ENCODE measurements at regions of chr17 and their contacts with region 1.

Region 1: DNA sequence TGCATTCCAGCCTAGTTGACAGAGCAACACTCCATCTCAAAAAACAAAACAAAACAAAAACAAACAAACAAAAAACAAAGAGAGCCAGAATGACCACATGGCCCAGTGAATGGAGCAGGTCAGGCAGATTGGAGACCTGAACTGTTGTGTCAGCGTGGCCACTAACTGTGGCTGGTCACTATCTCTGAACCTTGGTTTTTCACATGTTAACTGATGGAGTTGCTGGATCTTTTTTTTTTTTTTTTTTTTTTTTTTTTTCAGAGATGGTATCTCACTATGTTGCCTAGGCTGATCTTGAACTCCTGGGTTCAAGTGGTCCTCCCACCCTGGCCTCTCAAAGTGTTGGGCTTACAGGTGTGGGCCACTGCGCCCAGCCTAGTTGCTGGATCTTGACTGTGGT is 31.8 kb downstream of the RHBDL3 start:
- DNase-seq: no peak
- H3K4me3 ChIP-seq: no peak overlapping the region
- H3K27ac ChIP-seq: no peak overlapping the region
- H3K4me1 ChIP-seq: peaks cover 0 to 16% (median 1%) of the 10 kb centered on the region in 4 experiments; a peak in 5 of 7 replicates
- H3K27me3 ChIP-seq: no peaks in the 10 kb centered on the region
- CTCF ChIP-seq: no peak
- EP300 ChIP-seq: no peak
- POLR2A ChIP-seq: no peak
- RAD21 ChIP-seq: no peak

Region 2: GRCh38 chr17:32265192-32265923 is 32.1 kb before region 1 on chr17 and contains the start of gene RHBDL3:
- CTCF ChIA-PET with region 1: interaction called, 12 read pairs
- POLR2A ChIA-PET with region 1: no interaction called
- DNase-seq: no peak
- H3K4me3 ChIP-seq: peak within 1 kb of the TSS; percentile 42 to 87 (median 67)
- H3K27ac ChIP-seq: no peak within 1 kb of the TSS
- H3K4me1 ChIP-seq: peaks cover 7 to 24% (median 16%) of the 10 kb centered on the region in 4 experiments
- H3K27me3 ChIP-seq: peaks cover 0 to 34% (median 29%) of the 10 kb centered on the region in 4 experiments; a peak in 5 of 7 replicates
- CTCF ChIP-seq: no peak
- EP300 ChIP-seq: no peak
- POLR2A ChIP-seq: no peak
- RAD21 ChIP-seq: no peak
- total RNA-seq, gene RHBDL3: 11.8 and 12.2 TPM in 2 replicates

Region 3: GRCh38 chr17:32281011-32281451 is 16.4 kb before region 1 on chr17:
- CTCF ChIA-PET with region 1: interaction called, 13 read pairs
- POLR2A ChIA-PET with region 1: interaction called, 6 read pairs
- DNase-seq: peak in 1 of 2 experiments; percentile 82
- H3K4me3 ChIP-seq: peak overlapping the region in 2 of 4 experiments; percentile 20 to 22; a peak in 1 of 8 replicates
- H3K27ac ChIP-seq: no peak overlapping the region
- H3K4me1 ChIP-seq: peaks cover 8 to 42% (median 32%) of the 10 kb centered on the region in 4 experiments
- H3K27me3 ChIP-seq: peaks cover 0 to 2% (median 0%) of the 10 kb centered on the region in 4 experiments; a peak in 2 of 7 replicates
- CTCF ChIP-seq: no peak
- EP300 ChIP-seq: no peak
- POLR2A ChIP-seq: no peak; a peak in 1 of 3 replicates
- RAD21 ChIP-seq: no peak